IMR-90 (cell line): ENCODE measurements at regions of chr4 and their contacts with region 1.

Region 1: GRCh38 chr4:150379454-150379853 is 202.5 kb upstream of the MAB21L2 start:
- DNase-seq: peak; percentile 64
- ATAC-seq: no peak
- H3K4me3 ChIP-seq: no peak overlapping the region
- H3K27ac ChIP-seq: no peak overlapping the region
- H3K4me1 ChIP-seq: peaks cover 2% of the 10 kb centered on the region; the same call in 1 of the 2 replicates
- H3K27me3 ChIP-seq: no peaks in the 10 kb centered on the region
- CTCF ChIP-seq: no peak
- POLR2A ChIP-seq: no peak
- RAD21 ChIP-seq: no peak

Region 2: DNA sequence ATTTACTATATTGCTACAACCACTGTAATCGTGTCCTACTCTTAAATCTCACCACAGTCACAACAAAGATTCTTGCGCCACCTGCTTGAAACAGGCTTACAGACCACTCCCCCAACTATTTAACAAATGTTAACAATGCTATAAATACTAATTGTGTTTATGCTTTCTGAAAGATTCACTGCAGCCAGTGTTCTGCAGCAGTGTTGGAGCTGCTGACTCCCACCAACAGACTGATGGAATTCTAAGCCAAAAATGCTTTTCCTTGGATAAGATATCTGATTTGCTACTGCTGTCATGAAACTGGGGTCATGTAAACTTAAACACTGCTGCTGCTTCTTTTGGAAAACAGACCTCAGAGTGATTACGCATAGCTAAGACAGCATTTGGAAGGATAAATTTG is 41.7 kb before region 1 on chr4:
- CTCF ChIA-PET with region 1: interaction called, 4 read pairs
- POLR2A ChIA-PET with region 1: no interaction called
- dilution Hi-C with region 1: no loop called
- in situ Hi-C with region 1: no loop called
- intact Hi-C with region 1: loop called (anchors 5 kb)
- DNase-seq: peak; percentile 90
- ATAC-seq: peak; percentile 99
- H3K4me3 ChIP-seq: no peak overlapping the region
- H3K27ac ChIP-seq: no peak overlapping the region
- H3K4me1 ChIP-seq: peaks cover 2% of the 10 kb centered on the region
- H3K27me3 ChIP-seq: no peaks in the 10 kb centered on the region
- CTCF ChIP-seq: no peak
- POLR2A ChIP-seq: no peak
- RAD21 ChIP-seq: no peak